GM10248 (cell line): ENCODE measurements at regions of chr22 and their contacts with region 1.

Region 1: GRCh38 chr22:40922484-40923303 is 28.5 kb upstream of the RBX1 start:
- DNase-seq: peak; percentile 49
- CTCF ChIP-seq: peak; percentile 53

Region 2: GRCh38 chr22:40547729-40548172 is 374.9 kb before region 1 on chr22:
- CTCF ChIA-PET with region 1: no interaction called
- POLR2A ChIA-PET with region 1: no interaction called
- DNase-seq: no peak
- CTCF ChIP-seq: no peak

Region 3: GRCh38 chr22:40856513-40857308 is 66.0 kb before region 1 on chr22 and contains the starts of genes ST13 and XPNPEP3:
- CTCF ChIA-PET with region 1: interaction called, 10 read pairs
- POLR2A ChIA-PET with region 1: no interaction called
- DNase-seq: peak; percentile 95
- CTCF ChIP-seq: peak; percentile 10

Region 4: DNA sequence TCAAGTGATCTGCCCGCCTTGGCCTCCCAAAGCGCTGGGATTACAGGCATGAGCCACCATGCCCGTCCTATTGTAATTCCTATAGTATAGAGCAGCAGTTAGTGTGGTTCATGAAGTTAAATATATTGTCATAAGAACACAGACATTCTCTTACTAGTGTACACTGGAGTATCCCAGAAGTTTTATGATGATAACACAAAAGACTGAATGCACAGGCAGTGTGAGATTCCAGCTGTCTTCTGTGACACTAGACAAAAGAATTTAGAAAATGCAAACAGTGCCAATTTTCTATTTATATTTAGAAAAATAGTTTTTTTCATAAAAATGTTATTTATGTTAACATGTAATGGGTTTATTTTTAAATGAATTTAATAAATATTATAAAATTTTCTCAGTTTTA is 10.9 kb before region 1 on chr22:
- CTCF ChIA-PET with region 1: interaction called, 46 read pairs
- POLR2A ChIA-PET with region 1: no interaction called
- DNase-seq: no peak
- CTCF ChIP-seq: no peak

Region 5: DNA sequence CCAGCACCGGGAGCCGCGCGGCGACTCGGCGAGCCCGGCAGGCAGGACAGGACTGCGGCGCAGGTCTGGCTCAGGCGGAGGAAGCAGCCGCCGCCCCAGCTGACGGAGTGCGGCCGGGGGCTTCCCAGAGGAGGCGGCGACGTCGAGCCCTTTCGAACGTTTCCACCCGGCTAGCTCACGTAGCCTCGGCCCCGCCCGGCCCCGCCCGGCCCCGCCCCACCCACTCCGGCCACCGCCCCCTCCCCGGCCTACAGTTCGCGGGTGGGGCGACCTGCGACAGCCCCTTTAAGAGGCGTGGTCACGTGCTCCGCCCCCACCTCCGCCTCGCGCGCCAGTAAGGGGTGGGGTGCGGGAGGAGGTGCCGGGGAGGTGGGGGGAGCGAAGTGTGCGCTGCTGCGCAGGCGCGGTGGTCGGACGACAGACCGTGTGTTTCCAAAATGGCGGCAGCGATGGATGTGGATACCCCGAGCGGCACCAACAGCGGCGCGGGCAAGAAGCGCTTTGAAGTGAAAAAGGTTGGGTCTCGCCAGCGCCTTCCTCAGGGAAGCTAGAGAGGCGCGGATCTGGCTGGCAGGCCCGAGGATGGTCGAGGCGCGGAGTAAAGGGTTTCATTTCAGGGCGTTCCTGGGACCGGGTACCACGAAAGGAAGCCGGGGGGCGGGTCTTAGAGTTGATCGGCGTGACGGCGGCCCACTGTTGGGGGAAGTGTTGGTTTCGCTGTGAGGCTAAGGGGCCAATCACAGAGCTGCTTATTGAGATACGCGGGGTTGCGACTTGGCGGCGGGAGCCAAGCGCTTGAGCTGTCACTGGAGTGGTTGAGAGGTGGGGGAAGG is 28.5 kb after region 1 on chr22 and contains the start of gene RBX1:
- CTCF ChIA-PET with region 1: interaction called, 23 read pairs
- POLR2A ChIA-PET with region 1: no interaction called
- DNase-seq: peak; percentile 97
- CTCF ChIP-seq: no peak

Region 6: DNA sequence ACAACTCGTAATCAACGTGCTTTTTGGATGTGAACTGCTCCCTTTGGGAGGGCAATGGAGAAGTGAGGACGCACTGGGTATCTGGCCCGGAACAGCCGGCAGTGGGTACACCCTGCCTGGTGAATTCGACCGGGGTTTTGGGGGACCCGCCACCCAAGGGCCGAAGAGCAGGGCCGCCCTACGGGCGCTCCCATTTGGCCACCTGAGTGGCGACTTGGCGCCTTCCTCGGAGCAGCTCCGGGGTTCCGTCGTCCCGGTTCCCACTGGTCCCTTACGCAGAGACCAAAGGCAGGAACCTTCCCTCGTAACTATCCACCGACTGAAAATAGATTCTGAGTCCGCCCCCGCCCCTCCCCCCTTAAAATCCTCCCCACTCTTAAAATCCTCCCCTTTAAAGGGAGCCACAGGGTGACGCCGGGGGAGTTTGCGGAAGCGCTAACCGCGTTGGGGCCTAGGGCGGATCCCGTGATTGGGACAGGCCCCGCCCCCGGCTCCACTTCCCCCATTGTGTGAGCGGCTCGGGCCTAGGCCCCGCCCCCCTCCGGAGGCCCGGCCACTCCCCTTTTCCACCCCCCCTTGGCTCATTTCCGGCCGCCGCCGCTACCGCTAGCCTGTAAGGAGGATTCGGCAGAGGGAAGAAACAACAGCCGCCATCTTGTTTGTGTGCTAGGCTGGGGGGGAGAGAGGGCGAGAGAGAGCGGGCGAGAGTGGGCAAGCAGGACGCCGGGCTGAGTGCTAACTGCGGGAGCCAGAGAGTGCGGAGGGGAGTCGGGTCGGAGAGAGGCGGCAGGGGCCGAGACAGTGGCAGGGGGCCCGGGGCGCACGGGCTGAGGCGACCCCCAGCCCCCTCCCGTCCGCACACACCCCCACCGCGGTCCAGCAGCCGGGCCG is 168.7 kb after region 1 on chr22:
- CTCF ChIA-PET with region 1: interaction called, 12 read pairs
- POLR2A ChIA-PET with region 1: no interaction called
- DNase-seq: peak; percentile 99
- CTCF ChIP-seq: no peak

Region 7: DNA sequence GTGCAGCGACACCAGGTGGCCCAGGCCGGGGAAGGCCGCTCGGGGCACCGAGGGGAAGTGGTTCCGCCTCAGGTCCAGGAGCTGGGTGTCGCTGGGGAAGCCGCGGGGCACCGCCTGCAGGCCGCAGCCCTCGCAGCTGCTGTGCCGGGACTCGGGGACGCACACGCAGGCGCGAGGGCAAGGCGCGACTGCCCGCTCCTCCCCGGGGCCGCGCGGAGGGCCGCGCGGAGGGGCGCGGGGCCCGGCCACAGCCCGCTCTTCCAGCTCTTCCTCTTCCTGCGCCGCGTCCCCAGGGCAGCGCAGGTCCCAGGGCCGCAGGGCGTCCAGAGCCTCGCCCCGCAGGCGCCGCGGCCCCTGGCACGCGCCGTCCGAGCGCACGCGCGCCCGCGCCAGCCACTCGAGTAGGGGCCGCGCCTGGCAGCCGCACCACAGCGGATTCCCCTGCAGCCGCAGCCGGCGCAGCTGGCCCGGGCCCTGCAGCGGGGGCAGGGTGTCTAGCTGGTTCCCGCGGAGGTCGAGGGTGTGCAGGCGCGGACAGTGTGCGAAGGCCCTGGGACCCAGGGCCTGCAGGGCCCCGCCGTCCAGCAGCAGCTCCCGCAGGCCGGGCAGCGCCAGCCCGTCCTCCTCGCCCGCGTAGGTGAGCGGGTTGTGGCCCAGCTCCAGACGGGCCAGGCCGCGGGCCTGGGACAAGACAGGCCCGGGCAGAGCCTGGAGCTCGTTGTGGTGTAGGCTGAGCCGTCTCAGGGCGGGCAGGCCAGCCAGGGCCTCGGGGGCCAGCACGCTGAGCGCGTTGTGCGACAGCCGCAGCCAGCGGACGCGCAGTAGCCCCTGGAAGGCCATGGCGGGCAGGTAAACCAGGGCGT is 315.2 kb after region 1 on chr22:
- CTCF ChIA-PET with region 1: interaction called, 96 read pairs
- POLR2A ChIA-PET with region 1: no interaction called
- DNase-seq: peak; percentile 91
- CTCF ChIP-seq: peak; percentile 89

Region 8: DNA sequence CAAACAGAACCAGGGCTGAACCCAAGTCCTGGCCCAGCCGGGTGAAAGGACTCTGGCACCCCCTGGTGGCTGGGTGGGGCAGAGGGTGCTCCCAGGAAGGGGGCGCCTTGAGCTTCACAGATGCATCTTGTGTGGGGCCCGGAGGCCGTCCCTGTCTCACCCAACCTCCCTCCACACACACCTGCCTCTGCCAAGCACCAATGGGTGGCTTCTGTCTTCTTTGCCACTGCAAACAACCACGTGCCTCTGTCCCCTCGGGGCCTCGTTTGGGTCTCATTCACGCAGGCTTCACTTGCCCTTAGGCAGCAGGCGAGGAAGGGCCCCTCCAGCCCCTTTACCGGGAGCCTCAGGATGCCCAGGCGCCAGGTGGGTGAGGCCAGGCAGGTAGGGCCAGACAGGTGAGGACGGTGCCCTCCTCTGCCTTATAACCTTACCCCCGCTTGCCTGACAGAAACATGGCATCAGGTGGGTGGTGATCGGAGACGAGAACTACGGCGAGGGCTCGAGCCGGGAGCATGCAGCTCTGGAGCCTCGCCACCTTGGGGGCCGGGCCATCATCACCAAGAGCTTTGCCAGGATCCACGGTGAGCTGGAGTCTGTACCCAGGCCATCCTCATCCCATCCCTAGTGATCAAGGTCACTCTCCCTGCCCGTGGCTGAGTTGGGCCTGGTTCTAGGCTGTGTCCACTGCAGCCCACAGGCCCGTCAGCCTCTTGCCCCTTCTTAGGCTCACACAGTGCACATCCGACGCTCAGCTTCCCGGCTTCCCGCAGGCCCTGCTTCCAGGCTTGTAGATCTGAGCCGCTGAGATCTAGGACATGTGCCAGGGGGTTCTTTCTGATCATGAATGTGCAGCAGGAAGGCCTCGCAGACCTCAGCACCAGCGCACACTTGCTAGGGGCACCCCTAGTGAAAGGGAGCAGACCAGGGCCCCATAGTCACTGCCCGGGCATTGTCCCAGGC is 604.4 kb after region 1 on chr22:
- CTCF ChIA-PET with region 1: interaction called, 12 read pairs
- POLR2A ChIA-PET with region 1: no interaction called
- DNase-seq: peak; percentile 80
- CTCF ChIP-seq: peak; percentile 90